CD4-positive, alpha-beta T cell (primary cell): ENCODE measurements at regions of chr12 and their contacts with region 1.

Region 1: DNA sequence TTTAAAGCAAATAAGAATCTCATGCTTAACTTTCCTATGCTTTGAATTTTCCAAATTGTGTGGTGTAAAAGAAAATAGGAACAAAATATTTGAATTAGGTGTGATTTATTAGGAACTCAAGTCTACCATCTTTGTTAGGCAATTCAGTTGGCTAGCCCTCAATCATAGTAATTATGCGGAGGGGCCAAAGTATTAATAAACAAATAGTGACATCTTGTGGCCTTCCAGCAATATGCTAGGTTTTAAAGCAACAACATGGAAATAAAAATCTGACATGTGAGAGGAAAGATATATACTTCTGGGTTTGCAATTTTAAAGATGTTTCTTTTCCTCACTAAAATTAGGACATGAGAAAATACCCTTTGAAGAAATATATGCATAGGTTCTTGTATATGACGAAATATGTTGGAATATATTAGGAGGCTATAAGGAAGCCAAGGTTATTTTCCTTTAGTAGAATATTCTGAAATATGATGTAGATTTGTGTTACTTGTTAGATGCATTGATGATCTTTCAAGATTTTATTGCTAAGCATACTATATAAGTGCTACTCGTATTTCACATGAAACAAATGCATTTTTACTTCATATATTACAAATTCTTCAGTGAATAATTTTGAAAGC is 200.4 kb downstream of the PTPRO start:
- DNase-seq: peak in 3 of 14 experiments; percentile 30 to 39 (median 34)
- ATAC-seq: no peak
- H3K4me3 ChIP-seq: no peak overlapping the region
- H3K4me3 Mint-ChIP-seq: no peak overlapping the region
- H3K27ac ChIP-seq: no peak overlapping the region
- H3K27ac Mint-ChIP-seq: no peak overlapping the region
- H3K4me1 ChIP-seq: no peaks in the 10 kb centered on the region
- H3K4me1 Mint-ChIP-seq: no peaks in the 10 kb centered on the region
- H3K27me3 ChIP-seq: peaks cover 2 to 4% of the 10 kb centered on the region in 2 experiments
- H3K27me3 Mint-ChIP-seq: peaks cover 53% of the 10 kb centered on the region
- CTCF ChIP-seq: peak; percentile 29

Region 2: GRCh38 chr12:15276088-15276698 is 246.5 kb before region 1 on chr12:
- CTCF ChIA-PET with region 1: no interaction called
- POLR2A ChIA-PET with region 1: no interaction called
- intact Hi-C with region 1: loop called (anchors 5 to 10 kb)
- DNase-seq: peak in 3 of 14 experiments; percentile 11 to 36 (median 32)
- ATAC-seq: no peak
- H3K4me3 ChIP-seq: no peak overlapping the region
- H3K4me3 Mint-ChIP-seq: no peak overlapping the region
- H3K27ac ChIP-seq: no peak overlapping the region
- H3K27ac Mint-ChIP-seq: no peak overlapping the region
- H3K4me1 ChIP-seq: peaks cover 12% of the 10 kb centered on the region
- H3K4me1 Mint-ChIP-seq: peaks cover 10% of the 10 kb centered on the region
- H3K27me3 ChIP-seq: peaks cover 0 to 12% of the 10 kb centered on the region in 2 experiments
- H3K27me3 Mint-ChIP-seq: peaks cover under 1% of the 10 kb centered on the region
- CTCF ChIP-seq: peak; percentile 75